Head of caudate nucleus (tissue), 42 donors: ENCODE measurements at regions of chr9 and their contacts with region 1.

Region 1: DNA sequence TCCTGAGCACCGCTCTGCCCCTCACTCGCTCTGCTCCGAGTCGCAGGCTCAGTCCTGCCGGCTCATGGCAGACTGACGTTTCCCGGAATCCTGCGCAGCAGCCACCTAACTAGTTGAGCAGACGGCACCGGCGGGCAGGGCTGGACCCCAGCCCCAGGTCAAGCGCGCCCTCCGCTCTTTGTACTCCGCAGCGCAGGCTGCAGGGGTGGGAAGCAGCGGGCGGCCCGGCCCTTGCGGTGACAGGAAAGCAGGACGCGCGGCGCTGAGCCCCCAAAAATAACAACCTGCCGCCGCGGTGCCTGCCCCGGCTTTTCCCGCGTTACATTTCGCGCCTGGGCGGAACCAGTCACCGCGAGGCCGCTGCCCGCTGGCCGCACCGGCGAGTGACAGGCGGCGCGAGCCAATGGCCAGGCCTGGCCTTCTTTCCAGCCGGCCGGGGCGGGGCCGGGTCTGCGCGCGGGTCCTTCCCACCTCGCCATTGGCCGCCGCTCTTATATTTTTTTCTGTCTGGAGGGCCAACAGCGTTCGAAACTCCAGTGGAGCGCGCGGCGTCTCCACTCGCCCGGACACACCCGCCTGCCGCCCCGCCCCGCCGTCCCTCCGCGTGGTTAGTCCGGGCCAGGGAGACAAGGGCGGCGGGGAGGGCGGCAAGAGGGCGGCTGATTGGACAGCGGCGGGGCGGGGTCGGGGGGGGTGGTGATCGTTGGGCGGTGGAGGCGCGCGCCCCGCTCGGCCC is at the start of gene ZNF367:
- DNase-seq: peak; percentile 89 to 98 (median 96)

Region 2: GRCh38 chr9:96089452-96090085 is 328.7 kb before region 1 on chr9:
- intact Hi-C with region 1: no loop called
- DNase-seq: no peak

Region 3: GRCh38 chr9:96344458-96345180 is 73.6 kb before region 1 on chr9:
- intact Hi-C with region 1: loop called (anchors 10 kb)
- DNase-seq: peak in 41 of 42 donors; percentile 10 to 84 (median 58)

Region 4: DNA sequence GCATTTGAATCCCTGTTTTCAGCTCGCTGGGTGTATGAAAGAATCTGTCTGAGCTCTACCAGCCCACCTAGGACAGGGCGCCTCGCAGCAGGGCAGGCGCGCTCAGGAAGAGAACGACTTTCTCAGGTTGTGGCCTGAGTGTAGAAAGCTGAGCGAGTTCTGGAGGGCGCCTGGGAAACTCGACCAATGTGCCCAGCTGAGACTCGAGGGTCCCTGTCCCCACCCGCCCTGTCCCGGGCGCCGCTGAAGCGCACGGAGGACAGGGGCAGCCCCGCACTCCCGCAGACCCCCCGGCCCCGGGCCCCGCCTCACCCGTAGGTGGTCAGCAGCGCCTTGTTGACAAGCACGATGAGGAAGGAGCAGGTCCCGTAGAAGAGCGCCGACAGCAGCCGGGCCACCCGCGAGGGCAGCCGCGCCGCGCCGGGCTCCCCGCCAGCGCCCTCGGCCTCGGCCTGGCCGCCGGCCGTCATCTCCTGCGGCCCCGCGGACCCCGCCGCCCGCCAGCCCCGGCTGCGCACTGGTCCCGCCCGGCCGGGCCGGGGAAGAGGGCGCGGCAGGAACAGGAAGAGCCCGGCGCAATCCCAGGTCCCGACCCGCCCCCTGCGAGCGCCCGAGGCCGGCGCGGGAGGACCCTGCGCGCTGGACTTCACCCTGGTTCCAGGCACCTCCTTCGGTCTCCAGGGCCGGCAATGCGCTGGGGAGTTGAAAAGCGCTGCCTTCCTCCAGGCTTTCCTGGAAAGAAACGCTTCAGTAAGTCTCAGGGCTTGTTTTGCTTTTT is 34.9 kb before region 1 on chr9 and contains the start of gene SLC35D2:
- intact Hi-C with region 1: loop called (anchors 5 kb)
- DNase-seq: peak in 40 of 42 donors; percentile 22 to 82 (median 54)

Region 5: DNA sequence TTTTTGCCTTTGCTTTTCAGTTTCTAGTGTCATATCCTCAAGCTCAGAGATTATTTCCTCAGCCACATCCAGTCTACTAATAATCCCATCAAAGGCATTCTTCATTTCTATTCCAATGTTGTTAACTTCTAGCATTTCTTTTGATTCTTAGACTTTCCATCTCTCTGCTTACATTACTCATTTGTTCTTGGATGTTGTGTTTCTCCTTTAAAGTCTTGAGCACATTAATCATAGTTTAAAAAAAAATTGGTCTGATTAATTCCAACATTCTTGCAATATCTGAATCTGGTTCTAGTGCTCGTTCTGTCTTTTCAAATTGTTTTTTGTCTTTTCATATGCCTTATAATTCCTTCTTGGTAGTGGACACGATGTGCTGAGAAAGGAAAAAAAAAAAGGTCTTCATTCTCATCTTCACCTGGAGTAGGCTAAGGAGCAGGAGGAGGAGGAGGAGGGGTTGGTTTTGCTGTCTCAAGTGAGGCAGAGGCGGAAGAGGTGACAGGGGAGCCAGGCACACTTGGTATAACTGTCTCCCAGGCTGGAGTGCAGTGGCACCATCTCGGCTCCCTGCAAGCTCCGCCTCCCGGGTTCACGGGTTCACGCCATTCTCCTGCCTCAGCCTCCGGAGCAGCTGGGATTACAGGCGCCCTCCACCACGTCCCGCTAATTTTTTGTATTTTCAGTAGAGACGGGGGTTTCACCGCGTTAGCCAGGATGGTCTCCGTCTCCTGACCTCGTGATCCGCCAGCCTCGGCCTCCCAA is 220.5 kb after region 1 on chr9:
- intact Hi-C with region 1: no loop called
- DNase-seq: no peak

Region 6: GRCh38 chr9:96654443-96655197 is 236.4 kb after region 1 on chr9:
- intact Hi-C with region 1: loop called (anchors 10 kb)
- DNase-seq: peak; percentile 54 to 93 (median 77)